AG04449 (cell line): ENCODE measurements at regions of chr11 and their contacts with region 1.

Region 1: GRCh38 chr11:122721964-122722266 is 66.4 kb downstream of the UBASH3B start:
- DNase-seq: peak; percentile 49
- H3K4me3 ChIP-seq: no peak overlapping the region
- CTCF ChIP-seq: no peak

Region 2: GRCh38 chr11:122711831-122712381 is 10.0 kb before region 1 on chr11:
- CTCF ChIA-PET with region 1: interaction called, 8 read pairs
- POLR2A ChIA-PET with region 1: interaction called, 10 read pairs
- DNase-seq: no peak
- H3K4me3 ChIP-seq: no peak overlapping the region
- CTCF ChIP-seq: peak; percentile 29